GM12878 (cell line): ENCODE measurements at regions of chr17 and their contacts with region 1.

Region 1: GRCh38 chr17:82105882-82106687 is 8.0 kb upstream of the FASN start:
- DNase-seq: peak; percentile 51
- ATAC-seq: peak; percentile 99
- H3K4me3 ChIP-seq: peak overlapping the region; percentile 77
- H3K27ac ChIP-seq: peak overlapping the region; percentile 87
- H3K4me1 ChIP-seq: peaks cover 21% of the 10 kb centered on the region
- H3K27me3 ChIP-seq: no peaks in the 10 kb centered on the region
- CTCF ChIP-seq: peak; percentile 46 to 63 (median 56)
- EP300 ChIP-seq: no peak
- POLR2A ChIP-seq: peak; percentile 95
- RAD21 ChIP-seq: no peak

Region 2: DNA sequence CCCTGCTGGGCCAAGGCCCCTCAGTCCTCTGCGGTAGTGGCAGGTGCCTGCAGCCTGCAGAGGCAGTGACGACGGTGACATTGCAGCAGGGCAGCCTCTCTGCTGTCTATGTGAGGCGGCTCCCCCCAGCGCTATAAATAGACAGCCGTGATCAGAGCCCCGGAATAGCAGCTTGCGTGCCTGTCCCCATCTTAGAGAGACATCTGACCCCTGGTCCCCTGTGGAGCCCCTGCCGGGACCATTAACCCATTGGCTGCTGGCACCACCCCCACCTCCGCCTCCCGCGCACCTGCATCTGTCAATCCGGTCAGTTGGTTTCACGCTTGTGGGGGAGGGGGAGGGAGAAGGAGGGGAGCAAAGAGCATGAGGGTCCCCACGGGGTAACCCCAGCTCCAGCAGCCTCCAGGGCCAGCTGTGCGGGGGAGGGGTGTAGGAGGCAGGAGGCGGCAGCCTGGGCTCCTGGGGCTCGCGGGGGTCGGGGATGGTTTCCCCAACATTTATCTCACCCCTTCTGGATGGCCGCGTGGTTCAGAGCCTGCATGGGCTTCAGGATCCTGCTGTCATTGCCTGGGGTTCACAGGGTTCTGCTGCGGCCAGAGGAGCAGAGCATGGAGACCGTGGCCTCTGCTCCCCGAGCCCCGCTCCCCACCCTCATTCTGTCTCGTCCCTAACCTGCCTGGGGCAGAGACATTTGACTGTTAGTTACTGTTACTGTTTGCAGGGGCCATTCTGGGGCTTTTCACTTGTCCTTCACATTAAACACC is 164.1 kb before region 1 on chr17:
- CTCF ChIA-PET with region 1: no interaction called
- POLR2A ChIA-PET with region 1: no interaction called
- RAD21 ChIA-PET with region 1: no interaction called
- SMC1A ChIA-PET with region 1: no interaction called
- in situ Hi-C with region 1: no loop called
- intact Hi-C with region 1: no loop called
- DNase-seq: no peak
- ATAC-seq: no peak
- H3K4me3 ChIP-seq: no peak overlapping the region
- H3K27ac ChIP-seq: no peak overlapping the region
- H3K4me1 ChIP-seq: no peaks in the 10 kb centered on the region
- H3K27me3 ChIP-seq: no peaks in the 10 kb centered on the region
- CTCF ChIP-seq: no peak
- EP300 ChIP-seq: no peak
- POLR2A ChIP-seq: no peak
- RAD21 ChIP-seq: no peak

Region 3: GRCh38 chr17:82003411-82004381 is 102.4 kb before region 1 on chr17:
- CTCF ChIA-PET with region 1: no interaction called
- POLR2A ChIA-PET with region 1: no interaction called
- RAD21 ChIA-PET with region 1: no interaction called
- SMC1A ChIA-PET with region 1: no interaction called
- in situ Hi-C with region 1: no loop called
- intact Hi-C with region 1: no loop called
- DNase-seq: no peak
- ATAC-seq: no peak; the same call in 2 of the 3 replicates
- H3K4me3 ChIP-seq: no peak overlapping the region
- H3K27ac ChIP-seq: no peak overlapping the region
- H3K4me1 ChIP-seq: no peaks in the 10 kb centered on the region
- H3K27me3 ChIP-seq: no peaks in the 10 kb centered on the region
- CTCF ChIP-seq: no peak
- EP300 ChIP-seq: no peak
- POLR2A ChIP-seq: no peak
- RAD21 ChIP-seq: no peak

Region 4: GRCh38 chr17:82030470-82031302 is 75.4 kb before region 1 on chr17:
- CTCF ChIA-PET with region 1: interaction called, 11 read pairs
- POLR2A ChIA-PET with region 1: no interaction called
- RAD21 ChIA-PET with region 1: interaction called, 4 read pairs
- SMC1A ChIA-PET with region 1: interaction called, 4 read pairs
- in situ Hi-C with region 1: no loop called
- intact Hi-C with region 1: no loop called
- DNase-seq: no peak
- ATAC-seq: peak; percentile 86
- H3K4me3 ChIP-seq: peak overlapping the region; percentile 65; the same call in 1 of the 2 replicates
- H3K27ac ChIP-seq: no peak overlapping the region
- H3K4me1 ChIP-seq: no peaks in the 10 kb centered on the region; the same call in 1 of the 2 replicates
- H3K27me3 ChIP-seq: no peaks in the 10 kb centered on the region
- CTCF ChIP-seq: peak; percentile 77 to 95 (median 94); a peak in 5 of 6 replicates
- EP300 ChIP-seq: no peak
- POLR2A ChIP-seq: no peak
- RAD21 ChIP-seq: peak; percentile 94

Region 5: GRCh38 chr17:82086941-82087906 is 18.9 kb before region 1 on chr17:
- CTCF ChIA-PET with region 1: no interaction called
- POLR2A ChIA-PET with region 1: no interaction called
- RAD21 ChIA-PET with region 1: no interaction called
- SMC1A ChIA-PET with region 1: no interaction called
- in situ Hi-C with region 1: no loop called
- intact Hi-C with region 1: no loop called
- DNase-seq: no peak
- ATAC-seq: no peak
- H3K4me3 ChIP-seq: no peak overlapping the region
- H3K27ac ChIP-seq: no peak overlapping the region
- H3K4me1 ChIP-seq: no peaks in the 10 kb centered on the region
- H3K27me3 ChIP-seq: no peaks in the 10 kb centered on the region
- CTCF ChIP-seq: no peak
- EP300 ChIP-seq: no peak
- POLR2A ChIP-seq: peak; percentile 30; the same call in 1 of the 2 replicates
- RAD21 ChIP-seq: no peak

Region 6: DNA sequence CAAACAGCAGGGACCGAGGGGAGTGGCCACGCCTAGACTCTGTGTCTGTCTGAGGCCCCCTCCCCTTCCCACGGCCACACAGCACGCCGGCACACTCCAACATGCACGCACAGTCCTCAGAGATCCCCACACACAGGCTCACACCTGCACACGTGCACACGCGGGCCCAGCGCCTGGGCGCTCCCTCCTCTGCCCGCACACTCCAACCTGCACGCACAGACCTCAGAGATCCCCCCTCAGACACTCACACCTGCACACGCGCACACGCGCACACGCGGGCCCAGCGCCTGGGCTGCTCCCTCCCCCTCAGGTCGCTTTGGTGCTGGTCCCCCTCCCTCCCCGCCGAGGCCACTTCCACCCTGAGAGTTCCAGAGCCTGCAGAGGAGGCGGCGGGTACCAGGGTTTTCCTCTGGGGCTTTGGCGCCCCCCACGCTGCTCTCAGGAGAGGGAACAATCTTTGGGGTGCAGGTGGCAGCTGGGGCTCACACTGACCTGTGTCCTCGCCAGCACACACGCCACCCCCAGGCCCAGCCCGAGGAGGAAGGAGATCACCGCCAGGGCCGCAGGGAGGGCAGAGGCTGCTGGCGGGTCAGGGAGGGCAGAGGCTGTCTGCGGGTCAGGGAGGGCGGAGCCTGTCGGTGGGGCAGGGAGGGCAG is 209.7 kb after region 1 on chr17:
- CTCF ChIA-PET with region 1: no interaction called
- POLR2A ChIA-PET with region 1: no interaction called
- RAD21 ChIA-PET with region 1: no interaction called
- SMC1A ChIA-PET with region 1: no interaction called
- in situ Hi-C with region 1: no loop called
- intact Hi-C with region 1: no loop called
- DNase-seq: no peak
- ATAC-seq: peak; percentile 56
- H3K4me3 ChIP-seq: no peak overlapping the region
- H3K27ac ChIP-seq: no peak overlapping the region
- H3K4me1 ChIP-seq: no peaks in the 10 kb centered on the region
- H3K27me3 ChIP-seq: peaks cover 0 to 2% of the 10 kb centered on the region in 2 experiments; a peak in 2 of 4 replicates
- CTCF ChIP-seq: no peak
- EP300 ChIP-seq: no peak
- POLR2A ChIP-seq: no peak
- RAD21 ChIP-seq: no peak